A549 (cell line): ENCODE measurements at regions of chr2 and their contacts with region 1.

Region 1: DNA sequence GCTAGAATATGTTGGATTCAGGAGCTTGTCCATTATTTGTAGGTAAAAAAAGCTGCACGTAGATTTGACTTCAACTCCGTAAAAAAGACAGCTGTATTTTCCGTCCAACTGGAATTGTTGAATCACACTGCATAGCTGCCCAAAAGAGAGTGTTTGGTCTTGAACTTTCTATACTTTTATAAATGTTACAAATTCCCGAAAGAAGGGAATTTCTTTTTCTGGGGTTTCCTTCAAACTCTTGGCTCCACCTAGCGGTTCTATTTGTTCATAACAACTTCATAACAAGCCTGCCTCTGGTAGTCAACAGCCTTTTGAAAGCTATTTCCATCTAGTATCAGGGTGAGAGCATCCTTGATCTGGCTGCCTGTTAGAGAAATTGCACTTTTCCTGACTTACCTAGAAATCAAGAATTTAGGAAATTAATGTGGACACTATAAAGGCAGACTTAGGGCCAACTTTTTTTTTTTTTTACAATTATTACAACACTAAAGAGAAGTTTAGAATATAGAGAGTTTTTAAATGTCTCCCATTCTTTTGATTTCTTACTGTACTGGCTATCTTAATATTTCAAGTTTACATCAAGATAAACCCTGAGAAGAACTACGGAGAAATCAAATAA is 48.1 kb downstream of the TMEM185B start:
- DNase-seq: peak; percentile 26 to 54
- ATAC-seq: peak; percentile 68 to 73; a peak in 4 of 6 replicates
- H3K4me3 ChIP-seq: no peak overlapping the region
- H3K27ac ChIP-seq: no peak overlapping the region
- H3K4me1 ChIP-seq: no peaks in the 10 kb centered on the region
- CTCF ChIP-seq: peak; percentile 76
- EP300 ChIP-seq: no peak
- POLR2A ChIP-seq: no peak
- RAD21 ChIP-seq: peak; percentile 80 to 83

Region 2: GRCh38 chr2:119641562-119642258 is 533.4 kb before region 1 on chr2:
- CTCF ChIA-PET with region 1: interaction called, 15 read pairs
- POLR2A ChIA-PET with region 1: no interaction called
- DNase-seq: peak; percentile 74 to 87
- ATAC-seq: peak; percentile 96 to 99
- H3K4me3 ChIP-seq: no peak overlapping the region
- H3K27ac ChIP-seq: no peak overlapping the region
- H3K4me1 ChIP-seq: no peaks in the 10 kb centered on the region
- CTCF ChIP-seq: peak; percentile 95
- EP300 ChIP-seq: no peak
- POLR2A ChIP-seq: no peak
- RAD21 ChIP-seq: peak; percentile 79 to 86

Region 3: GRCh38 chr2:120012771-120013596 is 162.1 kb before region 1 on chr2 and contains the start of gene EPB41L5:
- CTCF ChIA-PET with region 1: no interaction called
- POLR2A ChIA-PET with region 1: no interaction called
- DNase-seq: peak; percentile 74 to 91
- ATAC-seq: peak; percentile 97
- H3K4me3 ChIP-seq: peak within 1 kb of the TSS; percentile 83
- H3K27ac ChIP-seq: peak within 1 kb of the TSS; percentile 79 to 93
- H3K4me1 ChIP-seq: peaks cover 28% of the 10 kb centered on the region
- CTCF ChIP-seq: no peak
- EP300 ChIP-seq: no peak
- POLR2A ChIP-seq: peak; percentile 64
- RAD21 ChIP-seq: no peak
- polyA plus RNA-seq, gene EPB41L5: 30.9 and 33.0 TPM in 2 replicates

Region 4: DNA sequence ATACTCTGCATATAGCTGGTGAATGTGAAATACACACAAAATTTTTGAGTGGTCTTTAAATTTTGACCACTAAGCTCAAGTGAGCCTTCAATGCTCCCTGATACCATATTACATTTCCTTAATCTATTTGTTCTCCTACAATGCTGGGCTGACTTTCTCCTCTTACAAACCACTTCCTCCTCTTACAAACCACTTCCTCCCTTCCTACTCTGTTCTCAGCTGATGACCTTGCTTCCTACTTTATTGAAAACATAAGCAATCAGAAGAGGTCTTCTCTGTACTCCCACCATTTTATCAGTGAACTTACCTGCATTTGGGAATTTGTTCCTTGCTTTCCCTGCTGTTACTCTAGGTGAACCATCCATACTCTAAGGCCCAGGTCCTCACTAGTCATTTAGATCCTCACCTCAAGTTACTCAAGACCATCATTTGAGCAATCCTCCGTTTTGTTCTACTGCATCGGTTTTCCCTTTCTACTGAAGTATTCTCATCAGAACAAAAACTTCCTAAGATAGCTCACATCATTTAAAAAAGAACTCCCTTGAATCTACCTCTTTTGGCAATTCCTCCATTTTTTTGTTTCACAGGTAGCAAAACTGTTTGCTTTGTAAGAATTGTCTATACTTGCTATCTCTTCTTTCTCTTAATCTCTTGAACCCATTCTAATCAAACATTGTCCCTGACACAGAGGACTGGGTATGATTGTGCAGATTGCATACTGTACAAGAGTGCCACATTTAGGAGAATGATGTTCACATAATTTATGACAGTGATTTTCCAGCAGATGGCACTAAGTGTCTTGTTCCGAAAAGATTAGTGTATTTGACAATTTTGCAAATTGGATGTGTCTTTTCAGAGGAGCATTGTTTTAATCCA is 65.6 kb before region 1 on chr2:
- CTCF ChIA-PET with region 1: interaction called, 36 read pairs
- POLR2A ChIA-PET with region 1: no interaction called
- DNase-seq: peak; percentile 33 to 54
- ATAC-seq: peak; percentile 66 to 83; a peak in 5 of 6 replicates
- H3K4me3 ChIP-seq: no peak overlapping the region
- H3K27ac ChIP-seq: peak overlapping the region in 1 of 2 experiments; percentile 22; a peak in 1 of 6 replicates
- H3K4me1 ChIP-seq: peaks cover 18% of the 10 kb centered on the region; the same call in 2 of the 3 replicates
- CTCF ChIP-seq: peak; percentile 81
- EP300 ChIP-seq: no peak
- POLR2A ChIP-seq: no peak
- RAD21 ChIP-seq: peak; percentile 78 to 84

Region 5: DNA sequence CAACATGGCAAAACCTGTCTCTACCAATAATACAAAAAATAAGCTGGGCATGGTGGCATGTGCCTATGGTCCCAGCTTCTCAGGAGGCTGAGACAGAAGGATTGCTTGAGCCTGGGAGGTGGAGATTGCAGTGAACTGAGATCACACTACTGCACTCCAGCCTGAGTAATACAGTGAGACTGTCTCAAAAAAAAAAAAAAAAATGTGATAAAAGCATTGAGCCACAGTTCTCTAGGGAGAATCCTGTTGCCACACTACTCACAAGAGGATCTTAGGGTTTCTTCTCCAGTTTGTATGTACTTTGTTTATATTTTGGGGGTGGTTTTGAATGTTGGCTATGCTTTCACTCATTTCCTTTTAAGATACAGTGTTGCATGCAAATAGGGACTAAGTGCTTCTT is 13.9 kb before region 1 on chr2:
- CTCF ChIA-PET with region 1: interaction called, 13 read pairs
- POLR2A ChIA-PET with region 1: no interaction called
- DNase-seq: no peak
- ATAC-seq: no peak
- H3K4me3 ChIP-seq: no peak overlapping the region
- H3K27ac ChIP-seq: no peak overlapping the region
- H3K4me1 ChIP-seq: no peaks in the 10 kb centered on the region
- CTCF ChIP-seq: no peak
- EP300 ChIP-seq: no peak
- POLR2A ChIP-seq: no peak
- RAD21 ChIP-seq: no peak

Region 6: GRCh38 chr2:120210262-120210693 is 35.2 kb after region 1 on chr2:
- CTCF ChIA-PET with region 1: interaction called, 12 read pairs
- POLR2A ChIA-PET with region 1: no interaction called
- DNase-seq: no peak
- ATAC-seq: no peak
- H3K4me3 ChIP-seq: no peak overlapping the region
- H3K27ac ChIP-seq: no peak overlapping the region
- H3K4me1 ChIP-seq: no peaks in the 10 kb centered on the region
- CTCF ChIP-seq: no peak
- EP300 ChIP-seq: no peak
- POLR2A ChIP-seq: no peak
- RAD21 ChIP-seq: no peak